ENCODE measurements at regions of chr14 and their contacts with region 1.

Region 1: DNA sequence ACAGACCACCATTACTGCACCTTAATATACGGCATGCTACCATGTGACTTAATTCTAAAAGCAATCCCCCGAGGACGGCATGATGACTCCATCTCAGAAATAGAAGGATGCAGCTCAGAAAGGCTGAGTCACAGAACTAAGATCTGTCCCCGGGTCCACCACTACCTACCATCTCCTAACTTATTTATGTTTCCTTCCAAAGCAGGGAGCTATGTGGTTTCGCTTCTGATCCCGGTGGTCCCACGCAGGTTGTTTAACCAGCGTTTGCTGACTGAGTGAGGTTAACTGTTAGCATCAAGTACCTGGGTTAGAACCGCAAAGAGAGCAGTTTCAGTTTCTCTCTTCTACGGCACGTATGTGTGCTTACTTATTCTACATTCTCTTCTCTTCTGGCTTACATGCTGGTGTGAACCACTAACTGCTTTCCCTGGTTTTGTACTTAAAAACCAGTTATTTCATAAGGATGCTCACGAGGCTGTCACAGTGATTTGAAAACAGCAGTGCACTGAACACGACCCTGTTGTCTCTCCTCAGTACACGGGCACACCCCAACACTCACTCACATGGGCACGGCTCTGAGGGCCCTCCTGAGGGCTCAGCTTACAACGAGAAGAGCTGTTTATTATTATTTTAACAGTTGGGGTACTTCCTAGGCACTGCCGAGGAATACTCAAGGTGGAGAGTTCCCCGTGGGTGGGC is 66.7 kb downstream of the CCDC88C start:
- DNase-seq: peak; percentile 81
- ATAC-seq: peak; percentile 59
- H3K4me3 Mint-ChIP-seq: peak overlapping the region; percentile 65
- H3K27ac Mint-ChIP-seq: peak overlapping the region; percentile 92
- H3K4me1 Mint-ChIP-seq: peaks cover 95% of the 10 kb centered on the region
- H3K27me3 Mint-ChIP-seq: no peaks in the 10 kb centered on the region

Region 2: DNA sequence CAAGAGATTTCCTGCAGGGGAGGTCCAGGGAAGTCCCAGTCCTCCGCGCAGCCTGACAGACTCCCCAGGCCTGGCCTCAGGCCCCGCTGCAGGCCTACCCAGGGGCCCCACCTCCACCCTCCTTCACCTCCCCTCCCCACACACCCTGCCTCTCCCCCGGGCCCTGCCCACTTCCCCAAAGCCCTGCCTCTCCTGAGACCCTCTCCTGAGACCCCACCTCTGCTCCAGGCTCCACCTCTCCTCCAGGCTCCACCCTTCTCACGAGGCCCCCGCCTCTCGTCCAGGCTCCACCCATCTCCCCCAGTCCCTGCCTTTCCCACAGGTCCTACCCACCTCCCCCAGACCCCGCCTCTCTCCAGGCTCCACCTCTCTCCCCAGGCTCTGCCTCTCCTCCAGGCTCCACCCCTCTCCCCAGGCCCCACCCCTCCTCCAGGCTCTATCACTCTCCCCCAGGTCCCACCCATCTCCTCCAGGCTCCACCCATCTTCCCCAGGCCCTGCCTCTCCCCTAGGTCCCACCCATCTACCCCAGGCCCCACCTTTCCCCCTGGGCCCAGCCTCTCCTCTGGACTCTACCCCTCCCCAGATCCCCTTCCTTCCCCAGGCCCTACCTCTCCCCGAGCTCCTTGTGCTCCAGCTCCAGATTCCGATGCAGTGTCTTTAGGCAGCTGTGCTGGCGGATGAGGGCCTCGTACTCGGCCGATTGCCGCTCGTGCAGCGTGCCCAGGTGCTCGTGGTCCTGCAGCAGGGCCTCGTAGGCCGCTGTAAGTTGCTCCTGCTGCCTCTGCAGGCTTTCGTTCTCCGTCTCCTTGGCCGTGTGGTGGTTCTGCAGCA is 47.7 kb before region 1 on chr14:
- CTCF ChIA-PET with region 1: no interaction called
- POLR2A ChIA-PET with region 1: no interaction called
- intact Hi-C with region 1: loop called in 1 of 2 experiments (anchors 1 kb)
- DNase-seq: peak; percentile 97
- ATAC-seq: peak; percentile 87
- H3K4me3 Mint-ChIP-seq: peak overlapping the region; percentile 66
- H3K27ac Mint-ChIP-seq: peak overlapping the region; percentile 97
- H3K4me1 Mint-ChIP-seq: peaks cover 63% of the 10 kb centered on the region
- H3K27me3 Mint-ChIP-seq: no peaks in the 10 kb centered on the region

Region 3: GRCh38 chr14:91361233-91362063 is 10.5 kb after region 1 on chr14:
- CTCF ChIA-PET with region 1: interaction called, 24 read pairs
- POLR2A ChIA-PET with region 1: interaction called, 6 read pairs
- intact Hi-C with region 1: no loop called
- DNase-seq: no peak
- ATAC-seq: no peak
- H3K4me3 Mint-ChIP-seq: no peak overlapping the region
- H3K27ac Mint-ChIP-seq: peak overlapping the region; percentile 1
- H3K4me1 Mint-ChIP-seq: peaks cover 74% of the 10 kb centered on the region
- H3K27me3 Mint-ChIP-seq: no peaks in the 10 kb centered on the region

Region 4: DNA sequence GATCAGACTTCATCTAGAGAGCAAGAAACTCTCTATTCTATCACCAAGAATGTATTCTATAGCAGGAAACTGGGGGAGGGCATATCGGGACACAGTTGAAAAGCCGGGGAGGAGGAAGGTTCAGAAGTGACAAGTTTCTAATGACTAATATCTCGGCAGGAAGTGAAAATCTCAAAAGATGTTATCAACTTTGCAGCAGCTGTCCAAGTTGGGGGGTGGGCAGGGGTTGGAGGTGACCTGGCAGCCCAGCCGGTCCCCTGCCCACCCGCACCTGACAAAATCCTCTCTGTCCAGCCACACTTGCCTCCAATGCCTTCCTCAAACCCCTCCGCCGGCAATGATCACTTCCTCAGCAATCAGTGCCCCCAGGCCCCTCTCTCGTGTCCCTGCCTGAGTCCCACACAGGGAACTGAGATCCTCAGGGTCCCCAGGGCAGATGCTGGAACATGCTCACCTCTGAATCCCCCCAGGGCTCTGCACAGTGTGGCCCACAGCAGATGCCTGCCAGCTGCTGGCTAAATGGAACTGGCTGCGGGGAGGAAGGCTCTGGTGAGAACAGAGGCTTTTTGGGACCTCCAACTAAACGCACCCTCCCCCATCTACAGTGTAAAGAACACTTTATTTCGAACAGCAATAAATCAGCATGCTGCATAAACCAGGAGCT is 22.8 kb after region 1 on chr14:
- CTCF ChIA-PET with region 1: interaction called, 7 read pairs
- POLR2A ChIA-PET with region 1: interaction called, 9 read pairs
- intact Hi-C with region 1: loop called (anchors 1 kb)
- DNase-seq: peak; percentile 81
- ATAC-seq: peak; percentile 71
- H3K4me3 Mint-ChIP-seq: peak overlapping the region; percentile 50
- H3K27ac Mint-ChIP-seq: peak overlapping the region; percentile 86
- H3K4me1 Mint-ChIP-seq: peaks cover 99% of the 10 kb centered on the region
- H3K27me3 Mint-ChIP-seq: no peaks in the 10 kb centered on the region

Region 5: DNA sequence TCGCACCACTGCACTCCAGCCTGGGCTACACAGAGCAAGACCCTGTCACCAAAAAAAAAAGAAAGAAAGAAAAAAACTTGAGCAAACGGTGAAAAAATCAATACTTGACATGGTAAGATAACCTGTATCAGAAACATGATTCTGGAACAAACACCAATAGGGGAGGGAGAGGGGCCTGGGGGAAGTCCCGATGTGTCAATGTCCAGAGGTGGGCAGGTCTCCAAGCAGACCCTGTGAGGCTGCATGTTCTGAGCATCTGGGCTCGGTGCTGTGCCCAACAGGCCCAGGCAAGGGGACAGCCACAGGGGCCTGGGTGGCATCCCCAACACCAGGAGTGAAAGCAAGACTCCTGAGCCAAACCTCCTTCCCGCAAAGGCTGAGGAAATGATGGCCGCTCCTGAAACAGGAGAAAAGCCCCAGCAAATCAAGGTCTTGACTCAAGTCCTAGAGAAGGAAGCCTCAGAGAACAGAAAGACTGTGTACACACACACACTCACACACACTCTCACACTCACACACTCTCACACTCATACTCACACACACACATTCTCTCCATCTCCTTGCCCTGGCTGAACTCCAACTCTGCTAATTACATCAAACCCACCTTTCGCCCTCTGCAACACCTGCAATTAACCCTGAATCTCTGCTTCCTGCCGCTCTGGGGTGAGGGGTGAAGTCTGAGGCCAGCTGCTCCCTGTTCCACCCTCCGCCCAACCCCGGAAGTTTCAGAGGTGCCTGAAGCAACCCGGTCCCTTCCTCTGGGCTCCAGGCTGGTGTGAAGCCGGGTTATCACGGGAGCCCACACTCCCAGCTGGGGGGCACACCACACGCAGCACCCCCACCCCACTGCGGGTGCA is 46.2 kb after region 1 on chr14:
- CTCF ChIA-PET with region 1: interaction called, 10 read pairs
- POLR2A ChIA-PET with region 1: interaction called, 4 read pairs
- intact Hi-C with region 1: loop called in 1 of 2 experiments (anchors 5 kb)
- DNase-seq: peak; percentile 83
- ATAC-seq: peak; percentile 85
- H3K4me3 Mint-ChIP-seq: peak overlapping the region; percentile 71
- H3K27ac Mint-ChIP-seq: peak overlapping the region; percentile 94
- H3K4me1 Mint-ChIP-seq: peaks cover 94% of the 10 kb centered on the region
- H3K27me3 Mint-ChIP-seq: no peaks in the 10 kb centered on the region

Region 6: DNA sequence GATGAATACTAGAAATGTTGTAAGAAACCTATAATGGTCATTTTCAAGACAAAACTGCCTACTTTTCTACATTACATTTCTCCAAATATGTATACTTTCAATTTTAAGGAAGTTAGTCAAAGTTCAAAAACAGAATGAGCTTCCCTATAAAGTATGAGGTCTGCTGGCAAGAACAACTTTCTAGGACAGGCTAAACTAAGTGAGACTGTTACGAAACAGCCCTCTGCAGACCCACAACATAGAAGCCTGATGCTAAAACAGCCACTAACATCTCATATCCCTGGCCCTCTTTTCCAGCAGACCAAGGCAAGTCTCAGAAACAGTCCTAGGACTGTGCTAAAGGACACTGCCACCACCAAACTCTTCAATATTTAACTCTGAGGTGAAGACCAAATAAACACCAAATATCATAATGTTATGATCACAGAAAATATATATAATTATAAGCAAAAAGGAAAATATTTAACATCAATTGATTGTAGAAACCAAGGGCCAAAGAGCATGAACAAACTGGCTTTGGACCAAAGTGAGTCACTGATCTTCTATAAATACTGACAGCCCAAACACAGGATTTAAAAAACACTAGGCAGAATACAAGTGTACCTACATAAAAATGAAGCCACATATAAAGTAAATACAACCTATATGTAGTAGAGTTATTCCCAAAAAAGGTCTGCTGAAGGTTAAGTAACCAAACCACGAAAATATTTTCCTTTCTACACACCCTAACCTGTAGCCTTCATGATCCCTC is 131.5 kb after region 1 on chr14:
- CTCF ChIA-PET with region 1: no interaction called
- POLR2A ChIA-PET with region 1: no interaction called
- intact Hi-C with region 1: no loop called
- DNase-seq: no peak
- ATAC-seq: no peak
- H3K4me3 Mint-ChIP-seq: no peak overlapping the region
- H3K27ac Mint-ChIP-seq: no peak overlapping the region
- H3K4me1 Mint-ChIP-seq: peaks cover 54% of the 10 kb centered on the region
- H3K27me3 Mint-ChIP-seq: no peaks in the 10 kb centered on the region

Region 7: DNA sequence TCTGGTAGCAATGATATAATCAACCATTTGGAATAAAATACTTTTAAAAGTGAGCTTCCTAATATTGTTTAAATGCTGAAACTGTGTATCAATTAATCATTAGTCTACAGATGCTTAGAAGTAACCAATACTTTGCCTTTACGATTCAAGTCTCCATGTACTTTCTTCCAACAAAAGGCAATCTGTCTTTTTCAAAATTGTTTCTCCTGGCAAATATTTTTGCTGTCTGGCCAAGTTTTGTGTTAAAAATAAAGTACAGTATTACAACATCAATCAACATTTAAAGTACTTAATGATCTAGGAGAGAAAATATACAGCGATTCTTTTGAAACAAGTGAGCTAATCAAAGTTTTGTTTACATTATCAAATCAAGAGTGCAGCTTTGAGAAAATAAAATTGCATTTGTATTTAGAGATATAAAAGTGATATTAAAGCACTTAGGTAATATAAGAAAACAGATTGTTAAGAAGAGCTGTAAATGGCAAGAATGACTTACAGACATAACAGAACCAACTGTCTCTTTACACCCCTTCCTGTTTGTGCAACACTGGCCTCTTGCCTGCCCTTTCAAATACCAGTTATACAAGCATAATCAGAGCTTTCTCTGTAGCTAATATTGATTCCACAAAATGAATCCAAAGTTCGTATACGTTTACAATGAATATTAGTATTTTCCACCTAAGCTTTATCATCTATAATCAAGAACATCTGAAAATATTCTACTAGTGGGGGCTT is 634.7 kb after region 1 on chr14:
- CTCF ChIA-PET with region 1: no interaction called
- POLR2A ChIA-PET with region 1: no interaction called
- intact Hi-C with region 1: no loop called
- DNase-seq: no peak
- ATAC-seq: no peak
- H3K4me3 Mint-ChIP-seq: no peak overlapping the region
- H3K27ac Mint-ChIP-seq: no peak overlapping the region
- H3K4me1 Mint-ChIP-seq: peaks cover 6% of the 10 kb centered on the region
- H3K27me3 Mint-ChIP-seq: no peaks in the 10 kb centered on the region

Region 8: GRCh38 chr14:92637228-92637627 is 1286.3 kb after region 1 on chr14:
- CTCF ChIA-PET with region 1: no interaction called
- POLR2A ChIA-PET with region 1: no interaction called
- intact Hi-C with region 1: no loop called
- DNase-seq: no peak
- ATAC-seq: no peak
- H3K4me3 Mint-ChIP-seq: no peak overlapping the region
- H3K27ac Mint-ChIP-seq: no peak overlapping the region
- H3K4me1 Mint-ChIP-seq: peaks cover 9% of the 10 kb centered on the region
- H3K27me3 Mint-ChIP-seq: no peaks in the 10 kb centered on the region